WTC11 (cell line): ENCODE measurements at regions of chr9 and their contacts with region 1.

Region 1: DNA sequence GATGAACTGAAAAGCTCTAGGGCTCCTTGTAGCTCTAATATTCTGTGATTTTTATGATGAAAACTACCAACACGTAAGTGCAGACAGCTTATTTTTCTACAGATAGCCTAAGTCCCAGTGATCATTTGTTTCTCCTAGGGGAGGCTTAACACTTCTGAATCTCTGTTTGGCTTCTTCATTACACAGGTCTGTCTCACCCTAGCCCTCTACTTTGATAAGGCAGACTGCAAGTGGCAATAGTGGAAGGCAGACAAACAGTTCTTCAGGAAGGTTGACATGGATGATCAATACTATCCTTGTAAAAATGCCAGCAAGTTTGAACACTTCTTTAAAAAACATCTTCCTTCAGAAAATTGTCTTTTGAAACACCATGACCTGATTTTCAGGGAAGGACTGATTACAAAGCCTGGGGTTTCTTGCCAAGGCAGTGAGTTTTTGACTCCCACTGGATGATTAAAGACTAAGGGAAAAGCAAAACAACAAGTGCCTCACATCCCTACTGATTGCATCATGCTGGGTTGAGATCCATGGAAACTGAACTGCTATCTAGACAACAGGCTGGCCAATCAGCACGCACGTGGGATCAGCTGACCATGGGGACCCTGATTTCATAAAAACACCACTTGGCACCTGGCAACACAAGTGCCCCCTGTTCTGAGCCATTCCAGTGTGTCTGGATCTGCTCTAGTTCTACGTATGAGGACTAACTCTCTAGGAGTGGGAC is 212.2 kb downstream of the SMARCA2 start:
- DNase-seq: no peak
- ATAC-seq: no peak; the same call in none of the 2 replicates
- H3K4me3 Mint-ChIP-seq: no peak overlapping the region
- H3K27ac Mint-ChIP-seq: peak overlapping the region; percentile 36
- H3K4me1 Mint-ChIP-seq: peaks cover 28% of the 10 kb centered on the region
- H3K27me3 Mint-ChIP-seq: peaks cover 2% of the 10 kb centered on the region; the same call in 1 of the 2 replicates
- CTCF ChIP-seq: no peak

Region 2: GRCh38 chr9:2174306-2174705 is 53.0 kb before region 1 on chr9:
- CTCF ChIA-PET with region 1: no interaction called
- POLR2A ChIA-PET with region 1: no interaction called
- DNase-seq: no peak
- ATAC-seq: no peak
- H3K4me3 Mint-ChIP-seq: no peak overlapping the region
- H3K27ac Mint-ChIP-seq: 0 out of 2 replicates have a peak overlapping the region, but pooled peaks have one; percentile 7
- H3K4me1 Mint-ChIP-seq: peaks cover 17% of the 10 kb centered on the region
- H3K27me3 Mint-ChIP-seq: no peaks in the 10 kb centered on the region
- CTCF ChIP-seq: no peak

Region 3: DNA sequence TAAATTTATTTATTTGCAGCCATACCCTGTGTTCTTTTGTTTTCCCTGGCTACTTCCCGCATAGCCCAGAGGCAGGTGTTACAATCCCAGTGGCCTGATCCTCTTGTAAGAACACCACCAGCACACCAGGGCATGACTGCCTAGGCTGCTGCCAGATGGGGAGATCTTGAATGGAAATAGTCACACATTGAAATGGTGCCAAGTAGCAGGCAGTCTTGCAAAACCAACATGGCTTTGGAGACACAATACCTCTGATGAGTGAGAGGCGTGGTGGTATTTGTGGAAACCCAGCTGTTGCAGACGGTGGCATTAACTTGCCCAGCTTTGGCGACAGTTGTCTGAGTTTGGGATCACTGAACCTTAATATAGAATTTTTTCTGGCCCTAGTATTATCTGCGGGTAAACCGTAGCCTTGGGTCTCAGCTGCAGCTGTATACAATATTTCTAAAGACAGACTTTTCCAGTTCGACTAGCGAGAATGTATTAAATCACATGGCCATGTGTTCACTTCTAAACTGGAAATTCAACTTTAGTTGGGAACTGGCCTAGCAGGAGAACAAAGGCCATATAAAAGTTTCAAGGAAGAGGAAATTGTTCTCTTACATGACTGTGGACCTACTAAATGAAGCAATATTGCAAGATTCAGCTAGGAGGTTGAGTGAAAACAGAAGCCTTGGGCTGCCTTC is 64.8 kb after region 1 on chr9:
- CTCF ChIA-PET with region 1: no interaction called
- POLR2A ChIA-PET with region 1: no interaction called
- DNase-seq: no peak
- ATAC-seq: peak; percentile 31; the same call in 1 of the 2 replicates
- H3K4me3 Mint-ChIP-seq: no peak overlapping the region
- H3K27ac Mint-ChIP-seq: peak overlapping the region; percentile 44; the same call in 1 of the 2 replicates
- H3K4me1 Mint-ChIP-seq: peaks cover 59% of the 10 kb centered on the region
- H3K27me3 Mint-ChIP-seq: peaks cover 22% of the 10 kb centered on the region
- CTCF ChIP-seq: no peak

Region 4: DNA sequence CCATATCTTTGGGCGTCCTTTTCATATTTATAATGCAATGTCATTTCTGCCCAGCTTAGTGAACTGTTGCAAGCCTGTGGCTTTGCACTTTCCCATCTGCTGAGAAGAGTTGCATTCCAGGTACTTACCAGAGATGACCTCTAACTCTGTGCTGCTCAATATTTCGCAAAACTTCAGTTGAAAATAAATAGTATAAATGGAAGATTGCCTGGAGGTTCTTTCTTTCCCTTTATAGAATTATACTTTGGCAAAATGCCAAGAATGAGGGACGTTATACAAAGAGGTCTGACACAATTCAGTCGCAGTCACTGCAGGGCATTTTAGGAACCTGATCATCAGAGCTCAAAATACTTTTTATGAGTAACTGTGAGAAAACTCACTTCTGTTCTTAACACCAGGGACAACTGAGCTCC is 375.4 kb after region 1 on chr9:
- CTCF ChIA-PET with region 1: no interaction called
- POLR2A ChIA-PET with region 1: interaction called, 10 read pairs
- DNase-seq: no peak
- ATAC-seq: no peak
- H3K4me3 Mint-ChIP-seq: no peak overlapping the region
- H3K27ac Mint-ChIP-seq: 0 out of 2 replicates have a peak overlapping the region, but pooled peaks have one; percentile 67
- H3K4me1 Mint-ChIP-seq: no peaks in the 10 kb centered on the region; the same call in 1 of the 2 replicates
- H3K27me3 Mint-ChIP-seq: no peaks in the 10 kb centered on the region
- CTCF ChIP-seq: no peak